Naive thymus-derived CD4-positive, alpha-beta T cell (primary cell): ENCODE measurements at regions of chr2 and their contacts with region 1.

Region 1: GRCh38 chr2:10448208-10448645 is at the start of gene ODC1:
- DNase-seq: peak; percentile 96 to 99 (median 97)
- ATAC-seq: peak; percentile 92
- H3K4me3 ChIP-seq: peak within 1 kb of the TSS; percentile 91
- H3K4me3 Mint-ChIP-seq: peak within 1 kb of the TSS; percentile 81 to 95 (median 86)
- H3K27ac ChIP-seq: peak within 1 kb of the TSS; percentile 88
- H3K27ac Mint-ChIP-seq: peak within 1 kb of the TSS; percentile 76 to 94 (median 89)
- H3K4me1 ChIP-seq: peaks cover 12 to 26% of the 10 kb centered on the region in 2 donors
- H3K4me1 Mint-ChIP-seq: peaks cover 7 to 47% (median 24%) of the 10 kb centered on the region in 7 donors
- H3K27me3 ChIP-seq: no peaks in the 10 kb centered on the region
- H3K27me3 Mint-ChIP-seq: no peaks in the 10 kb centered on the region
- total RNA-seq, gene ODC1: 32.7 to 88.2 (median 52.4) TPM

Region 2: DNA sequence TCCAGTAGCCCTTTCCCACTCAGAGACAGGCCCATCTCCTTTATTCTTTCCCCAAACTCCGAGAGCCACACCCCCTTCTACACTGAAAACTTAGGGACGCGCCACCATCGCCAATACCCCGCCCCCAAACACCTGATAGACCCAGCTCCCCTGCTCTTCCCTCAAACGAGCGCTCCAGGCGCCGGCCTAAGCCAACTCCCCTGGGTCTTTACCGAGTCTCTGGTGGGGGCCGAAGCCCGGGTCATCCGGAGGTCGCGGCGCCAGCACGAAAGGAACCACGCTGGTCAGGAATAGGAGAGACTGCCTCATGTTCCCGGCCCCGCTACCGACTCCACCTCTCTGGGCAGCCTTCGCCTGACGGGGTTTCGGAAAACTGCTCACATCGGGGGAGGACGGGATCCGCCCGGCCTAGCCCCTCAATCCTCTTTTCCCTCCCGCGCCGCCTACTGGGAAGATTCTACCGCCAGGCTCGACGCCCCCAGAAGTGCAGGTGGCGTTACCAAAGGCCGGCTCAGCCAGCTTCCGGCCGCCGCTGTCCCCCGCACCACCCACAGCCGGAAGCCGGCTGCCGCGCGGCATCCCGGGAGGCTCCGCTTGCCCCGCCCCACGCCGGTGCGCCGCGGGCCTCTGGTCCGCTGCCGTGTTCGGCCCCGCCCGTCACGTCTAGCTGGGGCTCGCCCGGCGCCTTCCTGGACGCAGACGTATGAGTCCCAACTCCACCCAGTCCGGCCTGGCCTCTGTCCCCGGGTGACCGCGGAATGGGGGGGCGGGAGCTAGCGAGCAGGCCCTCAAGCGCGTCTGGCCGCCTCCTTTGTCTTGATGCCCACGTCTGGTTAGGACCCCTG is 892.7 kb before region 1 on chr2 and contains the start of gene ADAM17:
- CTCF ChIA-PET with region 1: no interaction called
- POLR2A ChIA-PET with region 1: no interaction called
- intact Hi-C with region 1: loop called (anchors 2 kb)
- DNase-seq: peak; percentile 72 to 95 (median 80)
- ATAC-seq: peak; percentile 96
- H3K4me3 ChIP-seq: peak within 1 kb of the TSS; percentile 95
- H3K4me3 Mint-ChIP-seq: peak within 1 kb of the TSS; percentile 90 to 99 (median 96)
- H3K27ac ChIP-seq: peak within 1 kb of the TSS; percentile 97
- H3K27ac Mint-ChIP-seq: peak within 1 kb of the TSS; percentile 66 to 98 (median 96)
- H3K4me1 ChIP-seq: peaks cover 14 to 32% of the 10 kb centered on the region in 2 donors
- H3K4me1 Mint-ChIP-seq: peaks cover 35 to 63% (median 53%) of the 10 kb centered on the region in 7 donors
- H3K27me3 ChIP-seq: no peaks in the 10 kb centered on the region
- H3K27me3 Mint-ChIP-seq: no peaks in the 10 kb centered on the region
- total RNA-seq, gene ADAM17: 22.9 to 45.2 (median 25.9) TPM

Region 3: GRCh38 chr2:10122386-10123280 is 325.6 kb before region 1 on chr2 and contains the start of gene RRM2:
- CTCF ChIA-PET with region 1: interaction called, 3 read pairs
- POLR2A ChIA-PET with region 1: interaction called, 4 read pairs
- intact Hi-C with region 1: loop called (anchors 1 kb)
- DNase-seq: peak; percentile 74 to 94 (median 84)
- ATAC-seq: peak; percentile 82
- H3K4me3 ChIP-seq: peak within 1 kb of the TSS; percentile 55
- H3K4me3 Mint-ChIP-seq: peak within 1 kb of the TSS; percentile 80 to 99 (median 98)
- H3K27ac ChIP-seq: peak within 1 kb of the TSS; percentile 34
- H3K27ac Mint-ChIP-seq: peak within 1 kb of the TSS in 6 of 9 donors; percentile 17 to 99 (median 69)
- H3K4me1 ChIP-seq: peaks cover 24 to 29% of the 10 kb centered on the region in 2 donors
- H3K4me1 Mint-ChIP-seq: peaks cover 21 to 76% (median 41%) of the 10 kb centered on the region in 7 donors
- H3K27me3 ChIP-seq: peaks cover 0 to 7% of the 10 kb centered on the region in 2 donors
- H3K27me3 Mint-ChIP-seq: peaks cover 0 to 24% (median 10%) of the 10 kb centered on the region in 5 donors
- total RNA-seq, gene RRM2: 0.13 to 330 (median 0.51) TPM

Region 4: GRCh38 chr2:10434886-10435819 is 13.1 kb before region 1 on chr2:
- CTCF ChIA-PET with region 1: interaction called, 10 read pairs
- POLR2A ChIA-PET with region 1: interaction called, 13 read pairs
- intact Hi-C with region 1: no loop called
- DNase-seq: peak; percentile 31 to 84 (median 64)
- ATAC-seq: peak; percentile 74
- H3K4me3 ChIP-seq: no peak overlapping the region
- H3K4me3 Mint-ChIP-seq: peak overlapping the region in 1 of 10 donors; percentile 27
- H3K27ac ChIP-seq: no peak overlapping the region
- H3K27ac Mint-ChIP-seq: peak overlapping the region in 2 of 9 donors; percentile 14 to 72
- H3K4me1 ChIP-seq: peaks cover 0 to 5% of the 10 kb centered on the region in 2 donors
- H3K4me1 Mint-ChIP-seq: peaks cover 0 to 20% (median 12%) of the 10 kb centered on the region in 7 donors
- H3K27me3 ChIP-seq: peaks cover 0 to 2% of the 10 kb centered on the region in 2 donors
- H3K27me3 Mint-ChIP-seq: peaks cover 0 to 6% (median 2%) of the 10 kb centered on the region in 5 donors

Region 5: GRCh38 chr2:10659898-10660568 is 211.8 kb after region 1 on chr2:
- CTCF ChIA-PET with region 1: no interaction called
- POLR2A ChIA-PET with region 1: no interaction called
- intact Hi-C with region 1: loop called in 1 of 2 experiments (anchors 2 kb)
- DNase-seq: peak in 2 of 9 donors; percentile 10 to 42
- ATAC-seq: no peak
- H3K4me3 ChIP-seq: no peak overlapping the region
- H3K4me3 Mint-ChIP-seq: no peak overlapping the region
- H3K27ac ChIP-seq: no peak overlapping the region
- H3K27ac Mint-ChIP-seq: no peak overlapping the region
- H3K4me1 ChIP-seq: no peaks in the 10 kb centered on the region
- H3K4me1 Mint-ChIP-seq: peaks cover 0 to 15% (median 0%) of the 10 kb centered on the region in 7 donors
- H3K27me3 ChIP-seq: no peaks in the 10 kb centered on the region
- H3K27me3 Mint-ChIP-seq: no peaks in the 10 kb centered on the region

Region 6: DNA sequence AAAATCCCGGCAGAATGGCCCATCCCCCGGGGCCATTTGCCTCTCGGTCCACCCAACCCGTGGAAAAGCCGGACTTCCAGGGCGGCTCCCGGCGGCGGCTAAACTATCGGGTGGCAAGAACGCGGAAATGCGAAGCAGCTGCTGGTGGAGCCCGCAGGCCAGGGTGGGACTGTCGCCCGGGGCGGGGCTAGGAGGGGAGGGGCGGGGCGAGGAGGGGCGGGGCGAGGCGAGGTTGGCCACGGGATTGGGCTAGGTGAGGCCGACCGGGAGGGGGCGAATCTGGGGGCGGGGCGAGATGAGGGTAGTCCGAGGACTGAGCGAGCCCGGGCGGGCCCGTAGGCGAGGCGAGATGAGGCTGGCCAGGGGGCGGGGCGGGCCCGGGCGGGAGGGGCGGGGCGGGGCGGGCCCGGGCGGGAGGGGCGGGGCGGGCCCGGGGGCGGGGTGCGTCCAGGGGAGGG is 706.7 kb after region 1 on chr2:
- CTCF ChIA-PET with region 1: no interaction called
- POLR2A ChIA-PET with region 1: no interaction called
- intact Hi-C with region 1: loop called in 1 of 2 experiments (anchors 5 kb)
- DNase-seq: peak; percentile 92 to 97 (median 96)
- ATAC-seq: peak; percentile 94
- H3K4me3 ChIP-seq: peak overlapping the region; percentile 76
- H3K4me3 Mint-ChIP-seq: peak overlapping the region; percentile 73 to 88 (median 84)
- H3K27ac ChIP-seq: peak overlapping the region; percentile 75
- H3K27ac Mint-ChIP-seq: peak overlapping the region; percentile 44 to 94 (median 90)
- H3K4me1 ChIP-seq: peaks cover 10 to 15% of the 10 kb centered on the region in 2 donors
- H3K4me1 Mint-ChIP-seq: peaks cover 10 to 22% (median 18%) of the 10 kb centered on the region in 7 donors
- H3K27me3 ChIP-seq: no peaks in the 10 kb centered on the region
- H3K27me3 Mint-ChIP-seq: peaks cover 0 to 10% (median 0%) of the 10 kb centered on the region in 5 donors